WTC11 (cell line): ENCODE measurements at regions of chr19 and their contacts with region 1.

Region 1: GRCh38 chr19:53792721-53793433 is 31.2 kb downstream of the NLRP12 start:
- DNase-seq: peak; percentile 93
- ATAC-seq: peak; percentile 97
- H3K4me3 Mint-ChIP-seq: no peak overlapping the region
- H3K27ac Mint-ChIP-seq: peak overlapping the region; percentile 79
- H3K4me1 Mint-ChIP-seq: peaks cover 25% of the 10 kb centered on the region
- H3K27me3 Mint-ChIP-seq: 0 out of 2 replicates have a peak, but pooled peaks cover under 1% of the 10 kb centered on the region
- CTCF ChIP-seq: peak; percentile 97

Region 2: DNA sequence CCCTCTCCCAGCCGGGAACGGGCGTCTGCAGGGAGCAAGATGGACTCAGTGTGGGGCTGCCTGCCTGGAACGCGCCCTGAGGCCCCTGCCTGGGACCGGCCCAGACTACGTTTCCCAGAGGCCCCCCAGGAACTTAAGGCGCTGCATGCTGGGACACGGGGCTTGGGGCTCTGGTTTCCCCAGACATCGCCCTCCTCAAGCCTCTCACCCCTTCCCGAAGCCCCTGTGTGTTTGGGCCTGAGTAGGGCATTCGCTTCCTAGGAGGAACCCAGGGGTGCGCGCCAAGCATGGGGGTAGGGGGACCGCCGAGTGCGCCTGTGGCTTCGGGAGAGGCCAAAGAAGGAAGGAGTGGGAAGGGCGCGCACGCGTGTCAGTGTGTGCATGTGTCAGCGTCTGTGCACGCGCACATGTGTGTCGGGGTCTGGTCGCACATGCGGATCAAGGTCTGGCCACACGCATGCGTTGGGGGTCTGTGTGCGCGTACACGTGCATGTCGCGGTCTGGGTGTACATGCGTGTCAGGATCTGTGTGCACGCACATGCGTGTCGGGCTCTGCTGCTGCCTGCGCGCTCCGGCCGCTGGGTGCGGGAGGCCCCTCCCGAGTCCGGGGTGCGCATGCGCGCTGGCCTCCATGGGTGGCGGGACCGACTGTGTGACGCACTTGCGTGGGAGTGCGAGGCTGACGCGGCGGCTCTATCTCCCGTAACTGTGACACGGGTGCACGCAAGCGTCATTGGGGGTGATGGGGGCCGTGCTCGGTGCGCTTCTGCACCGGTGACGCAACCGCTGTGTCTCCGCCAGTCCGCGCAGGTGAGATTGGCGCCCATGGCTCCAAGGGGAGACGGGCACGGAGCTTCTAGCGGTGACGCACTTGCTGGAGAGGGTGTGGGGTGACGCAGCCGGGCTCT is 238.7 kb before region 1 on chr19:
- CTCF ChIA-PET with region 1: no interaction called
- POLR2A ChIA-PET with region 1: no interaction called
- DNase-seq: peak; percentile 52
- ATAC-seq: peak; percentile 67
- H3K4me3 Mint-ChIP-seq: peak overlapping the region; percentile 77
- H3K27ac Mint-ChIP-seq: peak overlapping the region; percentile 82
- H3K4me1 Mint-ChIP-seq: peaks cover 16% of the 10 kb centered on the region
- H3K27me3 Mint-ChIP-seq: no peaks in the 10 kb centered on the region
- CTCF ChIP-seq: no peak

Region 3: DNA sequence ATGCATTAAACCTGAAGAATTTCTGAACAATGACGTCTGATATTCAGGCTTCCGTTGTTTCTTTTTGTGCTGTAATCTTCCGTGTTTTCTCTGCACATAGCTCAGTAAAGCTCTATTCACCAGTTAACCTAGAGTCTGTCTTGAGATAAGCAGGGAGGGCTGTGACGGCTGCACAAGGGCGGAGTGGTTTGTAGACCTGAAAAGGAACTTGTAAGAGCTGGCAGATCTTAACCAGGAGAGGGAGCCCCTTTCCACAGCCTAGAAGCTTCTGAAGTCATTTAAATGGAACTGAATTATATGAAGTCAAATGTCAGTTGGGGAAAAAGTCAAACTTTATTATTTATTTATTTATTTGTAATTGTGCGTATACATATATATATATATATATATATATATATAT is 133.6 kb before region 1 on chr19:
- CTCF ChIA-PET with region 1: interaction called, 24 read pairs
- POLR2A ChIA-PET with region 1: no interaction called
- DNase-seq: peak; percentile 69
- ATAC-seq: peak; percentile 86
- H3K4me3 Mint-ChIP-seq: no peak overlapping the region
- H3K27ac Mint-ChIP-seq: peak overlapping the region; percentile 93
- H3K4me1 Mint-ChIP-seq: peaks cover 43% of the 10 kb centered on the region
- H3K27me3 Mint-ChIP-seq: peaks cover 8% of the 10 kb centered on the region
- CTCF ChIP-seq: peak; percentile 35; the same call in 1 of the 2 replicates

Region 4: GRCh38 chr19:53808710-53809125 is 15.8 kb after region 1 on chr19:
- CTCF ChIA-PET with region 1: interaction called, 79 read pairs
- POLR2A ChIA-PET with region 1: interaction called, 9 read pairs
- DNase-seq: peak; percentile 40
- ATAC-seq: peak; percentile 74
- H3K4me3 Mint-ChIP-seq: no peak overlapping the region
- H3K27ac Mint-ChIP-seq: no peak overlapping the region
- H3K4me1 Mint-ChIP-seq: peaks cover 10% of the 10 kb centered on the region
- H3K27me3 Mint-ChIP-seq: peaks cover 9% of the 10 kb centered on the region
- CTCF ChIP-seq: no peak

Region 5: GRCh38 chr19:53912653-53913052 is 119.8 kb after region 1 on chr19:
- CTCF ChIA-PET with region 1: interaction called, 11 read pairs
- POLR2A ChIA-PET with region 1: no interaction called
- DNase-seq: peak; percentile 88
- ATAC-seq: peak; percentile 49
- H3K4me3 Mint-ChIP-seq: no peak overlapping the region
- H3K27ac Mint-ChIP-seq: no peak overlapping the region; the same call in 1 of the 2 replicates
- H3K4me1 Mint-ChIP-seq: peaks cover 17% of the 10 kb centered on the region
- H3K27me3 Mint-ChIP-seq: peaks cover 34% of the 10 kb centered on the region
- CTCF ChIP-seq: peak; percentile 92

Region 6: DNA sequence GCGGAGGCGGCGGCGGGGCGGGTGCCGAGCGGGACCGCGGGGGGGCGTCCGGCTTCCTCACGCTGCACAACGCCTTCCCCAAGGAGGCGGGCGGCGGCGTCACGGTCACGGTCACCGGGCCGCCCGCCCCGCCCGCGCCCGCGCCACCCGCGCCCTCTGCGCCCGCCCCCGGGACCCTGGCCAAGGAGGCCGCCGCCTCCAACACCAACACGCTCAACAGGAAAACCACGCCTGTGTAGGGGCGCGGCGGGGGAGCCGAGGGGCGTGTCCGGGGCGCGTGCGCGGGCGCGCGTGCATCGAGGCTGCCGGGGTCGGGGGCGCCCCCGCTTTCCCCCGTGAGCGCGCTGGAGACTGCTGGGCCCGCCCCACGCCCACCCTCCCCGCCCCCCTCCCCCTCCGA is 189.7 kb after region 1 on chr19:
- CTCF ChIA-PET with region 1: interaction called, 10 read pairs
- POLR2A ChIA-PET with region 1: interaction called, 3 read pairs
- DNase-seq: peak; percentile 62
- ATAC-seq: no peak
- H3K4me3 Mint-ChIP-seq: no peak overlapping the region
- H3K27ac Mint-ChIP-seq: no peak overlapping the region
- H3K4me1 Mint-ChIP-seq: peaks cover 11% of the 10 kb centered on the region
- H3K27me3 Mint-ChIP-seq: peaks cover 4% of the 10 kb centered on the region; the same call in 1 of the 2 replicates
- CTCF ChIP-seq: no peak

Region 7: DNA sequence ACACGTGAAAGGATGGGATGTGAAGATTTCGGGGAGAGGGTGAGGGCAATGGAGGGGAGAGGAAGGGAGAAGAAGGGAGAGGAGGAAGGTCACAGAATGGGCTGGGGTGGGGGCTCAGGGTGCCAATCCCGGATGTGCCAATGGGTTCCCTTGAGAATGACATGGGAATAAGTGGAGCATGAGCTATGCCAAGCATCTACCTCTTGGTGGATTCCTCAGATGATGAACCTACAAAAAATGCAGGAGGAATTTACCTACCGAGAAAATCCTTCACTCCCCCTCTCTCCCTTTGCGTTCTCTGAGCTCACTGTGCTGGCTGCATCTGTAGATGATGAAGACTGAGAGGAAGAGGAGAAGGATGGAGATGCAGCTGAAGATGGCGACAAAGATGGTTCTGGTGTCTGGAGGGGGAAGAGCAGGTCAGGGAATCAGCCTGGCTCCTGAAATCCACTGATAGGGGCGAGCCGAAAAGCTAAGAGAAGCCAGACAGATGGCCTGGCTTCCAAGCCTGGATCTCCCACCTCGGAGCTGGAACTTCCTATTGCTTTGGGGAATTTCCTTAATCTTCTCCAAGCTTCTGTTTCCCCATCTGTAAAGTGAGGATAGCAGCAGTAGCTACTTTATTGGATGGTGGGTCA is 249.2 kb after region 1 on chr19:
- CTCF ChIA-PET with region 1: interaction called, 10 read pairs
- POLR2A ChIA-PET with region 1: no interaction called
- DNase-seq: no peak
- ATAC-seq: no peak
- H3K4me3 Mint-ChIP-seq: no peak overlapping the region
- H3K27ac Mint-ChIP-seq: 0 out of 2 replicates have a peak overlapping the region, but pooled peaks have one; percentile 28
- H3K4me1 Mint-ChIP-seq: peaks cover 28% of the 10 kb centered on the region
- H3K27me3 Mint-ChIP-seq: peaks cover 21% of the 10 kb centered on the region
- CTCF ChIP-seq: no peak